Vagina (tissue), 2 donors: ENCODE measurements at regions of chr15 and their contacts with region 1.

Region 1: GRCh38 chr15:54089791-54090190 is 111.5 kb downstream of the UNC13C start:
- DNase-seq: no peak
- H3K4me3 ChIP-seq: no peak overlapping the region
- H3K27ac ChIP-seq: no peak overlapping the region
- H3K4me1 ChIP-seq: no peaks in the 10 kb centered on the region
- H3K27me3 ChIP-seq: no peaks in the 10 kb centered on the region
- CTCF ChIP-seq: no peak
- POLR2A ChIP-seq: no peak

Region 2: DNA sequence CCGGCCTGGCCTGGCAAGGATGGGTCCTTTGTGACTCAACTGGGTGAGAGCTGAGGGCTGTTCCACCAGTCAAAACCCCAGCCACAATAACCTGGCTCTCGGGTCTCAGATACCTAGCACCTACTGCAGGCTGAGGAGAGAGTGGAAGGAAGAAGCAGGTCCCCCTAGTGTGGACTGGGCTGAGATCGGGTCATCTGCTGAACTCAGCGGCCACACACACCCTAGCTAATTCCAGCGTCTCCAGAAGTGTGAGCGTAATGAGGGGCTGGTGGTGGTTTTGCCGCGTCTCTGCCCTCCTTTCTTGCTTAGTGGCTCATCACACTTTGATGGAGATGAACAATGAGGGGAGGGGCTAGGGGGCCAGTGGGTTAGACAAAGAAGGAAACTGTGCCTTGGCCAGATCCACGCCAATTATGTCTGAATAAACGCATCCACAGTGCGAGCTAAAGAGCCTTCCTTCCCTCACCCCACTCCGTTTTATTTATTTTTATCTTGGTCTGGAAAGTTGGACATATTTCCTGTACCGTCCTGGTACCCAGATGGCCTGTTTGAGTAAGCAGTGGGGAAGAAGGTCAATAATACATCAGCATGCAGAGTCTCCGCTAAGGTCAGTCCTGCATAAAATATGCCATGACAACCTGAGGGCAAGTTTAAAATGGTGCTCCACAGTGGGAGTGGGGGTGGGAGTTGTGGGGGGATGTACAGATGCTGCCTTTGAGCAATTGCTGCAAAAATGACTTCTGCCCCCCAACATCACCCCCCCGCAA is 700.3 kb before region 1 on chr15:
- intact Hi-C with region 1: loop called (anchors 5 kb)
- DNase-seq: no peak
- H3K4me3 ChIP-seq: no peak overlapping the region
- H3K27ac ChIP-seq: no peak overlapping the region
- H3K4me1 ChIP-seq: no peaks in the 10 kb centered on the region
- H3K27me3 ChIP-seq: no peaks in the 10 kb centered on the region
- CTCF ChIP-seq: no peak
- POLR2A ChIP-seq: no peak

Region 3: DNA sequence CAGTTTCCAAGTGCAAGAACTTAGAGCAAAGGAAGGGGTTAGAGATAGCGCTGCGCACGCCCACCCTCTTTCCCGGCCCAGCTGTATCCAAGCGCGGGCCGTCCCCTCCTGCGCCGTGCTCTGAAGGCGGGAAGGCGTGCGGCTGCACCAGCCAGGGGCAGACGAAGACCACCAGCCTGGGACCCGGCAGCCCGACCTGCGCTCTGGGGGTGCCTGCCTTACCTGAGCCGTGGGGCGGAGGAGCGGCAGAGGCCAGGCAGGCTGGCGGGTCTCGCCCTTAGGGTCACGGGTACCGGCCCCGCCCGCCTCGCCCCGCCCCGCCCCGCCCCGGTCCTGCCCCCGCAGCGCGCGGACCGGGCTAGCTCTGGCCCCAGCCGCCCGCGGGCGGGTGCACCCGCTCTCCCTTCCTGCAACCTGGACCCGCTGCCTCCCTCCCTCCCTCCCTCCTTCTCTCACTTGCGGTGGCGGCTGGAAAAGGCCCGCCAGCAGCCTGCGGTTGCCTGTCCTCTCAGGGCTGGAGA is 330.3 kb before region 1 on chr15 and contains the start of gene WDR72:
- intact Hi-C with region 1: no loop called
- DNase-seq: no peak
- H3K4me3 ChIP-seq: no peak within 1 kb of the TSS
- H3K27ac ChIP-seq: no peak within 1 kb of the TSS
- H3K4me1 ChIP-seq: no peaks in the 10 kb centered on the region
- H3K27me3 ChIP-seq: no peaks in the 10 kb centered on the region
- CTCF ChIP-seq: no peak
- POLR2A ChIP-seq: no peak
- total RNA-seq, gene WDR72: not detected

Region 4: DNA sequence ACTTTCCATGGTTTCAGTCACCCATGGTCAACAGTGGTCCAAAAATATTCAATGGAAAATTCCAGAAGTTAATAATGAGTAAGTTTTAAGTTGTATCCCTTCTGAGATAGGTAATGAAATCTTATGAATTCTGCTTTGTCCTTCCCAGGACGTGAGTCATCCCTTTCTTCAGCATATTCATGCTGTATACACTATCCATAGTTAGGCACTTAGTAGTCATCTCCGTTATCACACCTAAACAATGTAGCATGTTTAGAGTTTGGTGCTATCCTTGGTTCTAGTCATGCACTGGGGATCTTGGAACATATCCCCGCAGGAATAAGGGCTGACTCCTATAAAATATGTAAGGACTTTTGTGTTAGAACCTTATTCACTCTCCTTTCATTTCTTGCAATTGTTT is 41.6 kb after region 1 on chr15:
- intact Hi-C with region 1: no loop called
- DNase-seq: no peak
- H3K4me3 ChIP-seq: no peak overlapping the region
- H3K27ac ChIP-seq: no peak overlapping the region
- H3K4me1 ChIP-seq: no peaks in the 10 kb centered on the region
- H3K27me3 ChIP-seq: no peaks in the 10 kb centered on the region
- CTCF ChIP-seq: no peak
- POLR2A ChIP-seq: no peak

Region 5: DNA sequence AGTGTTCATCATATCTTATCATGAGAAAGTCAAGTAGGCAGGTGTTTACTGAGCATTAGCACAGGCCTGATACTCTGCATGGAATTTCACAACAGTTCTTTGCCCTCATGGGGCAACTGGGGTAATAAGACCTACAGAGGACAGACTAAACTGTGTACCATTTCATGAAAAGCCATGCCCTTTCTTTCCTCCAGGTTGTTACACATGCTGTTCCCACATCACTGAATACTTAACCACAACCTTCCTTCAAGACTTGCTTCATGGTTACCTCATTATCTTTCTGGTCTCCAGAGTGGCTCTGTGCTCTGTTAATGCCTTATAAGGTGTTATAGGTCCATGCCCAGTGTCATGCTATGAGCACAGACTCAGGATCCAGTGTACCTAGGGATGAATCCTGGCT is 1135.1 kb after region 1 on chr15:
- intact Hi-C with region 1: no loop called
- DNase-seq: no peak
- H3K4me3 ChIP-seq: no peak overlapping the region
- H3K27ac ChIP-seq: no peak overlapping the region
- H3K4me1 ChIP-seq: peaks cover 9% of the 10 kb centered on the region
- H3K27me3 ChIP-seq: no peaks in the 10 kb centered on the region
- CTCF ChIP-seq: no peak
- POLR2A ChIP-seq: no peak